Left cardiac atrium (tissue), 4 donors: ENCODE measurements at regions of chr7 and their contacts with region 1.

Region 1: GRCh38 chr7:144821067-144821466 is 14.8 kb downstream of the TPK1 start:
- DNase-seq: no peak
- ATAC-seq: no peak

Region 2: GRCh38 chr7:144738708-144739314 is 82.3 kb before region 1 on chr7:
- intact Hi-C with region 1: loop called in 1 of 2 experiments (anchors 10 kb)
- DNase-seq: no peak
- ATAC-seq: no peak